Activated CD4-positive, alpha-beta memory T cell treated with anti-CD3 and anti-CD28 coated beads for 36 hours (primary cell): ENCODE measurements at regions of chr1 and their contacts with region 1.

Region 1: DNA sequence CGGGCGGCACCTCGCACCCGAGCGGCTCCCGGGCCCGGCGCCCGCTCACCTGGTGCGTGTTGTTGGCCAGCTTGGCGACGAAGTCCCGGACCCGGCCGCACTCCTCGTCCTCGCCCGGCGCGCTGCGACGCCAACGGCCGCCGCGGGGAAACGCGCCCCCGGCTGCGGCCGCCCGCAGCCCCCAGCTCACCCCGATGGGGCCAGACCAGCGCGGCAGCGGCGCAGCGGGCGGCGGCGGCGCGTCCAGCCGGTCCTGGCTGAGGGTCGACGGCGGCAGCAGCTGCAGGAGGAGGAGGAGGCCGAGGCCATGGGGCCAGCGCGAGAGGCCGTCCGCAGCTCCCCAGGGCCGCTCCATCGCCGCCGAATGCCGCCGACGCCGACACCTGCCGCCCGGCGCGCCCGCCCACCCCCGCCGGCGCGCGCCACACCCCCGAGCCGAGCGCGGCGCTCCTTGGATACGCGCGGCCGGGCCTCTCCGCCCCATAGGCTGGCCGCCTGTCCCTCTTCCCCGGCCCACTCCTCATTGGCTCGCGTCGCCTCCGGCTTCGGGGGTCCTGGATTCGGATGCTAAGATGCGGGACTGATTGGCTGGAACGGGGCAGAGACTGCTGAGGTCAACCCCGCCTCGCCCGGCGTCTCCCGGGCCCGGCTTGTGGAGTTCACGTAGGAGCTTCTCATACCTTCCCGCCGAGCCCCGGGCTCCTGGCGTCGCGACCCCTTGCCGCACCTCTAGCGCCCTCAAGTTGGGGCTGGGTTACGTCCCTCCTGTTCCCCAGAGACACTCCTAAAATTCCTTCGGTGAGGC is at the start of gene SORT1:
- DNase-seq: peak; percentile 65
- H3K4me3 Mint-ChIP-seq: peak within 1 kb of the TSS; percentile 65
- H3K27ac Mint-ChIP-seq: no peak within 1 kb of the TSS
- H3K4me1 Mint-ChIP-seq: peaks cover 7% of the 10 kb centered on the region
- H3K27me3 Mint-ChIP-seq: peaks cover 37% of the 10 kb centered on the region
- total RNA-seq, gene SORT1: 0.31 to 0.51 TPM

Region 2: GRCh38 chr1:109075531-109076490 is 321.9 kb before region 1 on chr1 and contains the start of gene TAF13:
- CTCF ChIA-PET with region 1: no interaction called
- POLR2A ChIA-PET with region 1: no interaction called
- intact Hi-C with region 1: no loop called
- DNase-seq: peak; percentile 94
- H3K4me3 Mint-ChIP-seq: peak within 1 kb of the TSS; percentile 99
- H3K27ac Mint-ChIP-seq: peak within 1 kb of the TSS; percentile 95
- H3K4me1 Mint-ChIP-seq: peaks cover 17% of the 10 kb centered on the region
- H3K27me3 Mint-ChIP-seq: no peaks in the 10 kb centered on the region
- total RNA-seq, gene TAF13: 28.4 to 29.0 TPM

Region 3: DNA sequence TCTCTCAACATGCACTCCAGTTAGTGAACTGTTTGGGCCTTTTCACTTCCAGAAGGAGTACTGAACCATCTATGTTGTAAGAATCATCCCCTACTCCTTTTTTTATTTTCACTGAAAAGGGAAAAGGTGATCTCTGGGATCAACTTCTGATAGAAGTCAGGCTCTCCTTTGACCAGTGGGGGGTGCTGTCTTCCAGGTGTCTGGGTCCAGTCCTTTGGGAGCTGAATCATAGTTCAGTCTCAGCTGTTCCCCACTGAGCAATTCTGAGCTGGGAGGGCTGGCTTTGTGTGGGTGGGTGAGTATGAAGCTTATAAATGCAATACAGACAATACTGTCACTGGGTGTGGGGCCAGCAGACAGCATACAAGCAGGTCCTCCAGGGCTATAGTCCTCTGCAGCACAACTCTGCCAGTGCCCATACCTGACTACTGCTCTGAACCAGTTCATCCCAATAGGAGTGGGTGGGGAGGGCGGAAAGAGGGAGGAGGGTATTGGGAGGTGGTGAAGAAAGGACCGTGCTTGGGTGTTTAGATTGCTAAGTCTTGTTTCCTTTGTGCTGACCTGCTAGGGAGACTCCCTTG is 196.5 kb before region 1 on chr1:
- CTCF ChIA-PET with region 1: interaction called, 38 read pairs
- POLR2A ChIA-PET with region 1: no interaction called
- intact Hi-C with region 1: loop called (anchors 1 kb)
- DNase-seq: peak; percentile 88
- H3K4me3 Mint-ChIP-seq: no peak overlapping the region
- H3K27ac Mint-ChIP-seq: no peak overlapping the region
- H3K4me1 Mint-ChIP-seq: peaks cover 22% of the 10 kb centered on the region
- H3K27me3 Mint-ChIP-seq: no peaks in the 10 kb centered on the region

Region 4: GRCh38 chr1:109248797-109249642 is 148.7 kb before region 1 on chr1 and contains the start of gene CELSR2:
- CTCF ChIA-PET with region 1: interaction called, 13 read pairs
- POLR2A ChIA-PET with region 1: no interaction called
- intact Hi-C with region 1: no loop called
- DNase-seq: peak; percentile 66
- H3K4me3 Mint-ChIP-seq: peak within 1 kb of the TSS; percentile 59
- H3K27ac Mint-ChIP-seq: no peak within 1 kb of the TSS
- H3K4me1 Mint-ChIP-seq: peaks cover 5% of the 10 kb centered on the region
- H3K27me3 Mint-ChIP-seq: peaks cover 8% of the 10 kb centered on the region
- total RNA-seq, gene CELSR2: 1.0 to 1.3 TPM

Region 5: DNA sequence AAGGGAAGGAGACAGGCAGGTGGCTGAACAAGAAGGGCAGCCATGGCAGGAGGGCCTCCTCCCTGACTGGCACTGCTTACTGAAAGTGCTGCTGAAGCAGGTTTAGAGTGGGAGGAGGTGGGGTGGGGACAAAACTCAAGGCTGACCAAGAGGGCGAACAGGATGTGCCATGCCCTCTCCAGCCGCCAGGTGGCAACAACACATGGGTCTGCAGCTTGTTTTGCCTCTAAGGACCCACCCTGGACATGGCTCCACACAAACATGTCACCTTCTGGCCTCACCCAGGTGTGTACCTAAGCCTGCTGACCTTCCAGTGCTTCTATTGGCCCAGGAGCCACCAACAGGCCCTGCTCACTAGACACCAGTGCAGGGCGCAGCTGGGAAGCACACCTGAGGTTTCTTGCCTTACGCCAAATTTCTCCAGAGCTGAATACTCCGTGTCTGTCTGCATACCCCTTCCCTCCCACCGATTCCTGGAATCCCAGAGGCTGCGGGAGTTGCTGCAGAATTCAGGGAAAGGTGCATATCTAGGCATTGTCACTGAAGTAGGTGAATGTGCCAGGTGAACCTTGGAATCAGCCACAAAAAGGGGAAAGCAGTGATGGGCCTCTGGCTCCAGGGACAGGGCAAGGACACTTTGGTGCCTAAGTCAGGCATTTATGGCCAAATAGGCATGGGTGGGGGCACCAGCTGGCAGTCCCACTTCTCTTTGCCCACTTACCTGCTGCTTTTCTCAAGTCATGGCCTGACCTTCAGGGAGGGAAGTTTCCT is 120.1 kb before region 1 on chr1:
- CTCF ChIA-PET with region 1: interaction called, 205 read pairs
- POLR2A ChIA-PET with region 1: interaction called, 6 read pairs
- intact Hi-C with region 1: loop called (anchors 1 kb)
- DNase-seq: peak; percentile 83
- H3K4me3 Mint-ChIP-seq: no peak overlapping the region
- H3K27ac Mint-ChIP-seq: no peak overlapping the region
- H3K4me1 Mint-ChIP-seq: peaks cover 8% of the 10 kb centered on the region
- H3K27me3 Mint-ChIP-seq: no peaks in the 10 kb centered on the region

Region 6: DNA sequence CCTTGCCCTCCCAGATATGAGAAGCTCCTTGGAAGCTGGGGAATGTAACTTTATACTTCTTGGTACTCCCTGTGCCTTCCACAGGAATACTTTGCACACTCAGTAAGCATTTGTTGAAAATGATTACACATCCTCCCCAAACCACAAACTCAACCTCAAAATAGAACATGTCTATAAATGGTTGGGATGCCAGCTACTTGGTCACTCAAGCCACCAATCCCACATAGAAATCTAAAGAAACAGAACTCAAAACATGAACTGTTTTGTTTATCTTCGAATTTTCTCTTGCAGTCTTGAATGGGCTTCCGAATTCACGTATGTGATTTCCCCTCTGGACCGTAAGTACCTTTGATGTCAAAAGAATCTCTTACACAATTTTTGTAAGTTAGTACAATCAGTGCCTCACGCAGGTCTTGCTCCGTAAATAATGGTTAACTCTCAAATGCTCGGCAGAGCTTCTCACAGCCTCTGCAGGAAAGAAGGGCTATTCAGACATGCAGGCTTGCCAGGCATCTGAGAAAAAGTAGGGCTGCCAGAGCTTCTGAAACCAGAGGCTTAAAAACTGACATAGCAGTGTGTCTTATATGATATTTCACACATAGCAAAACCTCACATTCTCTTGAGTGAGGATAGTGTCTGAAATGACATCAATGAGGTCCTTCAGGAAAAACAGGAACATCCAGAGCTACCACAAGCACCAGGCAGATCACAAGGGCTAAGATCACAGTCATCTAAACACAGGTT is 26.9 kb before region 1 on chr1:
- CTCF ChIA-PET with region 1: interaction called, 10 read pairs
- POLR2A ChIA-PET with region 1: no interaction called
- intact Hi-C with region 1: no loop called
- DNase-seq: no peak
- H3K4me3 Mint-ChIP-seq: no peak overlapping the region
- H3K27ac Mint-ChIP-seq: no peak overlapping the region
- H3K4me1 Mint-ChIP-seq: peaks cover 20% of the 10 kb centered on the region
- H3K27me3 Mint-ChIP-seq: peaks cover 22% of the 10 kb centered on the region